Right ventricle myocardium superior (tissue), 1 donor: ENCODE measurements at regions of chr4 and their contacts with region 1.

Region 1: DNA sequence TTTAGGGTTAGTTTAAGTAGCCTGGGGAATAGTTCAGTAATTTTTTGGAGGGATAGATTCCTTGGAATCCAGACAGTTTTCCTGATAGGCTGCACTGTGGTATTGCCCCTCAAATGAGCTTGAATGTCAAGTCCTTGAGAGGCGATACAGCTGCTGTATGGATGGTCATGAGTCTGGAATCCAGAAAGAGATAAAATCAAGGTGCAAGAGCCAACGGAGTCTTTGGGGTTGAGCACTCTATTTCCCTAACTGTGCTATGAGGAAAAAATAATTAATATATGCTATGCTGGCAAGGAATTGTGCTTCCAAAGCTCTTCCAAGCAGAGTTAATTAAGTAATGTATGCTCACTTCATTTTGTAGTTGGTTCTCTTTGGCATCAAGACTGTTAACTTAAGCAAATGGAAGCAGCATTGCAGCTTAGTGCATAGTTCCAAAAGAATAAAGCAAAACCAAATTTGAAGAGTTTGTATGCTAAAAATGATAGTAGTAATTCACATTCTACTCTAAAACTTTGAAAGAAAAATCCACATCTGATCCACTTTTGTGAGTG is 48.8 kb downstream of the LIMCH1 start:
- DNase-seq: no peak
- ATAC-seq: no peak

Region 2: GRCh38 chr4:41538017-41538733 is 48.6 kb before region 1 on chr4 and contains the start of gene LIMCH1:
- intact Hi-C with region 1: loop called (anchors 10 kb)
- DNase-seq: peak; percentile 87
- ATAC-seq: peak; percentile 88
- total RNA-seq, gene LIMCH1: 272 TPM

Region 3: GRCh38 chr4:41678086-41678816 is 91.5 kb after region 1 on chr4:
- intact Hi-C with region 1: no loop called
- DNase-seq: no peak
- ATAC-seq: no peak

Region 4: GRCh38 chr4:41832961-41833360 is 246.2 kb after region 1 on chr4:
- intact Hi-C with region 1: no loop called
- DNase-seq: no peak
- ATAC-seq: no peak